ENCODE measurements at regions of chr11 and their contacts with region 1.

Region 1: DNA sequence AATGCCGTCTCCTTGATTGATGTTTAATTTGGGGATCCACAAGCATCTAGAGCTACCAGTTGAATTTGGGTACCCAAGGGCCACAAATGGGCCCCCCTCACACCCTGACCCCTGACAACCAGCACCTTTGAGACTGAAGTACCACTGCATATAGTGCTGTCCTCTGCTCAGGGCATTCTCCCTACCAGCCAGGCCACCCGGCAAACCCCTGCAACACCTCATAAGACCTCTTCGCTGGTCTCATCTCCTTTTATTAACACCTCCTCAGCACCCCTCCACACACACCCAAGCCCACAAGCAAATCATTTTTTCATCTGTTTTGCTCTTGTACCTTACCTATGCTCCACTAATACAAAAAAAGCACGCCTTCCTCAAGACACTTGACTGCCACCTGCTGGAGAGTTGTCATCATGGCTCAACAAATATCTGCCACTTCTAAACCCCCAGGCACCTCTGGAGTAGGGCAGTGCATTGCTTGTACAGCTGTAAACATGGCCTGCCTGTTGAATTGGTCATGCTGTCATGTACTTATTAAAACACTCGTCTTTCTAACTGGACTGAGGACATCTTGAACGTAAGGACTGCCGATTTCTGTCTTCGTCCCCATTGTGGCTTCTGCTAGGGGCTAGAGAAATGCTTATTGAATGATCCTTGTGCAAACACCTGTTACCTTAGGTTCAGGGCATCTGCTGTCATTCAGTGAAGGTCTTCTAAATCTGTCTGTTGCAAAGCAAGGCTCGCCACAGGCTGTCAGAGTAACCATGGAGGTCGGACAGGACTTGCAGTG is 66.5 kb downstream of the BMAL1 start:
- DNase-seq: peak; percentile 61 to 86
- ATAC-seq: peak; percentile 72 to 78 (median 76)
- H3K4me3 ChIP-seq: no peak overlapping the region
- H3K4me3 Mint-ChIP-seq: peak overlapping the region; percentile 3
- H3K27ac ChIP-seq: no peak overlapping the region
- H3K27ac Mint-ChIP-seq: peak overlapping the region; percentile 1 to 64
- H3K4me1 ChIP-seq: peaks cover 23% of the 10 kb centered on the region
- H3K4me1 Mint-ChIP-seq: peaks cover 89 to 92% of the 10 kb centered on the region in 2 donors
- H3K27me3 ChIP-seq: no peaks in the 10 kb centered on the region
- H3K27me3 Mint-ChIP-seq: no peaks in the 10 kb centered on the region
- CTCF ChIP-seq: peak; percentile 82

Region 2: DNA sequence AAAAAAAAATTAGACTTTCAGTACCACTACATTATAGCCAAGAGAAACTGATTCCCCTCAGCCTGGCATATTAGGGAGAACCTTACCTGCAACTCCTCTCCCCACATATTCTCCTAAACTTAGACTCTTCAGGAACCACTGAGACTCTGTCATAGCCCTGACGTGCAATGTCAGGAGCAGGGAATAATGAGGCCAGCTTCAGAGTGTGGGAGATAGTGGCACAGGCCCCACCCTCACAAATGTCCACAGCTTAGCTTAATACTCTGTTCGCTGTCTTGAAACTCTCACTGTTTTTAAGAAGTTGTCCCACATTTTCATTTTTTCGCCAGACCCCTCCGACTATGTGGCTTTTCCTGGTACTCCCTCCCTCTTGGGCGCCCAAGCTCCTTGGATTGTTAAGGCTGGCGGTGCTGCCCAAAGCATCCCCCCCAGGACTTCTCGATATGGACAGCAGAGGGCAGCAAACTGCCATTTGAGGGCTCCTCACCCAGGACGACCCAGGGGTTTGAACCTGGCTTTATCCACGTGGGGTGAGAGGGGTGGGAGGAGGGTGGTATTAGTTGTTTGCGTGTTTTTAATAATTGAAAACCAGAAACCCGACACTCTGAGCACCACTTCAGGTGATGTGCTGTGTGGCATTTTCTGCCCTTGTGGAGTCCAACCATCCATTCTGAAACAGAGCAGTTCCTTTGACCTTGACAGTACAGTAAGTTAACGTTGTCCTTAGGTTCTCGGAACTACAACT is 380.2 kb before region 1 on chr11:
- intact Hi-C with region 1: loop called (anchors 2 kb)
- DNase-seq: peak; percentile 42 to 72
- ATAC-seq: peak; percentile 69 to 86 (median 80)
- H3K4me3 ChIP-seq: no peak overlapping the region
- H3K4me3 Mint-ChIP-seq: no peak overlapping the region
- H3K27ac ChIP-seq: no peak overlapping the region
- H3K27ac Mint-ChIP-seq: no peak overlapping the region
- H3K4me1 ChIP-seq: no peaks in the 10 kb centered on the region
- H3K4me1 Mint-ChIP-seq: no peaks in the 10 kb centered on the region
- H3K27me3 ChIP-seq: no peaks in the 10 kb centered on the region
- H3K27me3 Mint-ChIP-seq: peaks cover 6 to 23% of the 10 kb centered on the region in 2 donors
- CTCF ChIP-seq: peak; percentile 71

Region 3: DNA sequence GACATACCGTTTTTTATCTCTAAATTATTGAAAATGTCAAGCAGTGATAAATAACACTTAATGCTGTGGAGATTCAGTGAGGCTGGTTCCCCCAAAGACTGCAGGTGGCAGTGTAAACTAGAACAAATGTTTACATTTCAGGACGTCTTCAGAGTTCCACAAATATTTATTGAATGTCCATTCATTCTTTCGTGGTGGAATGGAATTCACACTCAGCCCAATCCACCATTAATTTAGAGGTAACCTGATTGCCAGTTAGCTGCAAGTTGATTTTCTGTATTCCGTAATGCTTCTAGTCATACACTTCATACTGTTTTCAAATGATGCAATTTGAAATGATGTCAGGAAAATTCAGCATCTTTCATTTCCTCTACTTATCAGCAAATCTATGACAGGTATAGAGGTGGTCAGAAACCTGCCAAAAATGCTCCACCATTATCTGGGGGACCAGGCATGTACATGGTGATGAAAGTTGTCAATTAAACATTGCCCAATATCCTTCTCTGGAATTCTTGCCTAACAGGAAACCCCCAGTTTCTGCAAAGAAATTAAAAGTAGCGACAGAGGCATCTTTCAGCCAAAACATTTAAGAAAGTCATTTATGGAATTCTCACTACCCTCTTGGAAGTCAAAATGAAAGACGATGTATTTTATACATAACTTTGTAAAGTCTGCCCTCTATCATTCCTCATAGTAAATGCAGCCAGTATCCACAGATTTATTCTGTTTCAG is 160.9 kb before region 1 on chr11:
- intact Hi-C with region 1: loop called (anchors 1 kb)
- DNase-seq: peak in 1 of 2 donors; percentile 53
- ATAC-seq: peak in 1 of 3 donors; percentile 48
- H3K4me3 ChIP-seq: no peak overlapping the region
- H3K4me3 Mint-ChIP-seq: no peak overlapping the region
- H3K27ac ChIP-seq: no peak overlapping the region
- H3K27ac Mint-ChIP-seq: no peak overlapping the region
- H3K4me1 ChIP-seq: no peaks in the 10 kb centered on the region
- H3K4me1 Mint-ChIP-seq: peaks cover 4 to 6% of the 10 kb centered on the region in 2 donors
- H3K27me3 ChIP-seq: no peaks in the 10 kb centered on the region
- H3K27me3 Mint-ChIP-seq: peaks cover 9% of the 10 kb centered on the region in 2 donors
- CTCF ChIP-seq: peak; percentile 21

Region 4: GRCh38 chr11:13249996-13250395 is 94.1 kb before region 1 on chr11:
- intact Hi-C with region 1: loop called (anchors 1 kb)
- DNase-seq: peak in 1 of 2 donors; percentile 38
- ATAC-seq: peak in 2 of 3 donors; percentile 47 to 55
- H3K4me3 ChIP-seq: no peak overlapping the region
- H3K4me3 Mint-ChIP-seq: no peak overlapping the region
- H3K27ac ChIP-seq: no peak overlapping the region
- H3K27ac Mint-ChIP-seq: no peak overlapping the region
- H3K4me1 ChIP-seq: no peaks in the 10 kb centered on the region
- H3K4me1 Mint-ChIP-seq: no peaks in the 10 kb centered on the region
- H3K27me3 ChIP-seq: peaks cover 4% of the 10 kb centered on the region
- H3K27me3 Mint-ChIP-seq: peaks cover 13 to 26% of the 10 kb centered on the region in 2 donors
- CTCF ChIP-seq: peak; percentile 27

Region 5: DNA sequence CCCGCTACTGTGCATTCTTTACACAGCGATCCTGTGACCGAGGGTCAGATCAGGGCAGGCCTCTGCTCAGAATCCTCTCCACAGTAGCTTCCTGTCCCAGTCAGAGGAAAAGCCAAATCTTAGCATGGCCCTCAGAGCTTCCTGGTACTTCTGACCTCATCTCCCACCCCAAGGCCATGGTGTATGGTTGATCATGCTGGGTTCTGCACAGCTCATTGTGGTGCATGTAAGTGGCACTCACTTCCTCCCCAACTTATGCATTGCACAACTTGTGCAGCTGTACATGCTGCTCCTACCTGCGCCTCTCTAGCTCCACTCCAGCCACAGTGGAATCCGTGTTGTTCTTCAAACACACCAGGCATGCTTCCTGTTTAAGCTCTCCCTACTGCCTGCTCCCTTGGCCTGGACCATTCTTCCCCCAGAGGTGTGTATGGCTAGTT is 46.2 kb before region 1 on chr11:
- intact Hi-C with region 1: no loop called
- DNase-seq: peak in 1 of 2 donors; percentile 25
- ATAC-seq: peak; percentile 79 to 90 (median 81)
- H3K4me3 ChIP-seq: no peak overlapping the region
- H3K4me3 Mint-ChIP-seq: peak overlapping the region; percentile 64
- H3K27ac ChIP-seq: no peak overlapping the region
- H3K27ac Mint-ChIP-seq: peak overlapping the region; percentile 67 to 72
- H3K4me1 ChIP-seq: peaks cover 79% of the 10 kb centered on the region
- H3K4me1 Mint-ChIP-seq: peaks cover 0 to 66% of the 10 kb centered on the region in 2 donors
- H3K27me3 ChIP-seq: no peaks in the 10 kb centered on the region
- H3K27me3 Mint-ChIP-seq: no peaks in the 10 kb centered on the region
- CTCF ChIP-seq: no peak